ENCODE measurements at regions of chr2 and their contacts with region 1.

Region 1: GRCh38 chr2:227241005-227241404 is 76.6 kb downstream of the COL4A3 start:
- DNase-seq: no peak
- H3K4me3 ChIP-seq: no peak overlapping the region
- CTCF ChIP-seq: no peak

Region 2: GRCh38 chr2:227310751-227311100 is 69.7 kb after region 1 on chr2:
- in situ Hi-C with region 1: loop called (anchors 5 kb)
- DNase-seq: no peak
- H3K4me3 ChIP-seq: no peak overlapping the region
- CTCF ChIP-seq: no peak

Measured in astrocyte of the cerebellum (primary cell).